Activated CD4-positive, alpha-beta memory T cell treated with anti-CD3 and anti-CD28 coated beads, Interleukin-2, amount 10 ng/mL, durations not matched to agents 7 days and 5 days (primary cell): ENCODE measurements at regions of chr16 and their contacts with region 1.

Region 1: GRCh38 chr16:85615852-85616606 is 2.9 kb downstream of the GSE1 start:
- DNase-seq: peak; percentile 76
- H3K4me3 Mint-ChIP-seq: no peak overlapping the region
- H3K27ac Mint-ChIP-seq: no peak overlapping the region
- H3K4me1 Mint-ChIP-seq: peaks cover 31% of the 10 kb centered on the region
- H3K27me3 Mint-ChIP-seq: peaks cover 7% of the 10 kb centered on the region

Region 2: DNA sequence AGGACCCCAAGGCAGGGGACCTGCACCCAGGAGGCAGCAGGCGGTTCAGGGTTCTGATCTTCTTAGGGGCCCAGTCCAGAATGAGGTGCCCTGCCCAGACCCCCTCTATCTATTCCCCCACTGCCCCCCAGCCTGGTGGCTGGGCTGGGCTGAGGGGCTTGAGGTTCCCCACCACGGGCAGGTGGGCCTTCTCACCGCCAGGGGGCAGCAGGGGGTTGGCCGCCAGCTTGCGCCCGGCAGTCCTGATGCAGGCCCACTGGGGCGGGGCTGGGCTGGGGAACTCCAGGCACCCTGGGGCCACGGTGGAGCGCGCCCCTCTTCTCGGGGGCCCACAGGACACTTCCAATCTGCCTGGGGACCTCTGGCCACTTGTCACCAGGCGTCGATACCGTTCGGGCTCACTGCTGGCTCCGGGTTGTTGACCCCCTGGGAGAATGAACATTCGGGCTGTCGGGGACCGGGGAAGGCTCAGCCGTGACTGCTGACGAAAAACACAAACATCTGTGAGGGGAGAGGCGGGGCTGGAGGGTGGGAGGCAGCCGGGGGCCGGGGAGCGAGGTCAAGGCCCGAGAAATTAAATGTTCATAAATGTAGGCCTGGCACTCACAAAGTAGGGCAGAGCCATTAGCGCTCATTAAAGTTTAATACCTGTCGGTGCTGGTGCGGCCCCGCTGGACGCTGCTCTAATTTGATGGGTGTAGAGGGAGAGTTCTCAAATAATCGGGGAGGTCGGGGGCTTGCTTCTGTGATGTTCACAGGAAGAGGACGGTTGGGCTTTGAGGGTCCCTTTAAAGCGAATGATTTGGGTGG is 222.2 kb before region 1 on chr16:
- CTCF ChIA-PET with region 1: interaction called, 11 read pairs
- POLR2A ChIA-PET with region 1: no interaction called
- DNase-seq: peak; percentile 55
- H3K4me3 Mint-ChIP-seq: no peak overlapping the region
- H3K27ac Mint-ChIP-seq: no peak overlapping the region
- H3K4me1 Mint-ChIP-seq: no peaks in the 10 kb centered on the region
- H3K27me3 Mint-ChIP-seq: peaks cover 2% of the 10 kb centered on the region

Region 3: GRCh38 chr16:85491058-85491771 is 124.8 kb before region 1 on chr16:
- CTCF ChIA-PET with region 1: interaction called, 19 read pairs
- POLR2A ChIA-PET with region 1: no interaction called
- DNase-seq: peak; percentile 48
- H3K4me3 Mint-ChIP-seq: no peak overlapping the region
- H3K27ac Mint-ChIP-seq: no peak overlapping the region
- H3K4me1 Mint-ChIP-seq: no peaks in the 10 kb centered on the region
- H3K27me3 Mint-ChIP-seq: no peaks in the 10 kb centered on the region

Region 4: DNA sequence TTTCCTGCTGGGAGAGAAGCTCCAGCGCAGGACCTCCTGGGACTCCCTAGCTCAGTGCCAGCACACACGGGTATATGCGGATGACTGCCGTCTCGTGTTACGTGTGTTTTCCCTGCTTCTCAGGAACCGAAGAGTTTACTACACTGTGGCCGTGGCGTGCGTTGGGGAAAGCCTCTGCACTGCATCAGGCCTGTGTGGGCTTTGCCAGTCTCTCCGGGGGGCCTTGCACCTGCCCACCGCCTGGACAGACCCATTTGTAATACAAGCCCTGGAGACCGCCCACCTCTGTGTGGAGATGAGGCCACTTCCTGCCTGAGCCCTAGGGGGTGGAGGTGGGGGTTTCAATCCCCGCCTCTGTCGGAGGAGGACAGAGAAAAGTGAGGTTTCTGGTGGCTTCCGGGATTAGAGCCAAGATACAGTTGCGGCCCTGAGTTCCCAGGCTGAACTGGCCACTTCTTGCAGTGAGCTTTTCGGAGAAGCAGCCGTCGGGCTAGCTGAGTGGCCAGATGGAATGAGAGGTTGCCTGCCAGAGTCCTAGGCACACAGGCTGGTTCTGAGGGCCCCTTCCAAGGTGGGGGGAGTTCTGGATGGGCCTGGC is 46.3 kb before region 1 on chr16:
- CTCF ChIA-PET with region 1: interaction called, 11 read pairs
- POLR2A ChIA-PET with region 1: no interaction called
- DNase-seq: peak; percentile 51
- H3K4me3 Mint-ChIP-seq: peak overlapping the region; percentile 43
- H3K27ac Mint-ChIP-seq: peak overlapping the region; percentile 72
- H3K4me1 Mint-ChIP-seq: peaks cover 50% of the 10 kb centered on the region
- H3K27me3 Mint-ChIP-seq: no peaks in the 10 kb centered on the region

Region 5: GRCh38 chr16:85659805-85660495 is 43.9 kb after region 1 on chr16:
- CTCF ChIA-PET with region 1: interaction called, 12 read pairs
- POLR2A ChIA-PET with region 1: no interaction called
- DNase-seq: peak; percentile 72
- H3K4me3 Mint-ChIP-seq: no peak overlapping the region
- H3K27ac Mint-ChIP-seq: no peak overlapping the region
- H3K4me1 Mint-ChIP-seq: no peaks in the 10 kb centered on the region
- H3K27me3 Mint-ChIP-seq: no peaks in the 10 kb centered on the region